Lower leg skin (tissue), 4 donors: ENCODE measurements at regions of chr6 and their contacts with region 1.

Region 1: DNA sequence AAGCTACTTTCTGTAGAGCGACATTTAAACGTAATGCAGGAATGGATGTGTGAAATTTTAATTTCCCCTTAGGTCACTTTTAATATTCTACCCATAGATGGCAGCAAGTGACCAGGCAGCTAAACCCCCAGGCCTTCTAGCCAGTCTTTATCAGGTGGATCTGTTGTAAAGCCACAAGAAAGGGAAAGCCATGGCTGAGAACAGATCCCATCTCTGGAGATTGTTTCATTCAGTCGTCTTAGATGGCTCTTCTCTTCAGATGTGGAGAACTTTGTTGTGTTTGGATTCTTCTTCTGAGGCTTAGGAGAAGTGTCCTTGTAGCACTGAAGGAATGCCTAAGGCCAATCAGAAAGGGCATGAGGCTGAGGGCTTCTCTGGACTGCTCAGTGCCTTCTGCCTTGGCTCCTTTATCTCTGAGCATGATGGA is 15.8 kb upstream of the RNF182 start:
- DNase-seq: no peak
- H3K4me3 ChIP-seq: no peak overlapping the region
- CTCF ChIP-seq: no peak
- POLR2A ChIP-seq: no peak

Region 2: GRCh38 chr6:14144678-14145113 is 235.7 kb after region 1 on chr6:
- intact Hi-C with region 1: loop called (anchors 10 kb)
- DNase-seq: peak; percentile 20 to 86
- H3K4me3 ChIP-seq: no peak overlapping the region
- CTCF ChIP-seq: peak in 1 of 3 donors; percentile 83
- POLR2A ChIP-seq: no peak